Body of pancreas (tissue), 4 donors: ENCODE measurements at regions of chr10 and their contacts with region 1.

Region 1: DNA sequence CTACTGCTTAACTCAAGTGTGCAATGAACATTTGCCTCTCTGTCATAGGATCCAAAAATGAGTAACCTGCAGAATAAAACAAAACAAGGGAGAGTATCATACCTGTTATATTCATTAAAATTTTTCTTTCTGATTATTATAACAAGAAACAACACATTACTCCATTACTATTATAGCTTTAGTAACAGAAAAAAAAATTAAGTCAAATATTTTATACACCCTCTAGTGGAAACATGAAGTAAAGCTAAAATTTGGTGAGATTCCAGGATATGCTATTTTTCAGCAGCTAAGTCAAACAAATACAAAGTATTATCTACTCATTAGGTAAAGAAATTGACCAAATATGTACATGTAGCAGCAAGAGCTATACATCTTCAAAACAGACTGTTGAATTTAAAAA is 56.3 kb downstream of the PDZD8 start:
- DNase-seq: no peak
- ATAC-seq: no peak
- H3K4me3 ChIP-seq: no peak overlapping the region
- H3K27ac ChIP-seq: no peak overlapping the region
- H3K4me1 ChIP-seq: peaks cover 16% of the 10 kb centered on the region
- H3K27me3 ChIP-seq: no peaks in the 10 kb centered on the region
- CTCF ChIP-seq: peak; percentile 14 to 39 (median 30)
- POLR2A ChIP-seq: no peak

Region 2: GRCh38 chr10:116985611-116986010 is 333.3 kb before region 1 on chr10:
- intact Hi-C with region 1: no loop called
- DNase-seq: no peak
- ATAC-seq: no peak
- H3K4me3 ChIP-seq: no peak overlapping the region
- H3K27ac ChIP-seq: no peak overlapping the region
- H3K4me1 ChIP-seq: no peaks in the 10 kb centered on the region
- H3K27me3 ChIP-seq: no peaks in the 10 kb centered on the region
- CTCF ChIP-seq: no peak
- POLR2A ChIP-seq: no peak

Region 3: GRCh38 chr10:117221156-117221711 is 97.7 kb before region 1 on chr10:
- intact Hi-C with region 1: loop called (anchors 5 kb)
- DNase-seq: no peak
- ATAC-seq: no peak
- H3K4me3 ChIP-seq: no peak overlapping the region
- H3K27ac ChIP-seq: no peak overlapping the region
- H3K4me1 ChIP-seq: peaks cover 12% of the 10 kb centered on the region
- H3K27me3 ChIP-seq: peaks cover 0 to 3% of the 10 kb centered on the region in 2 donors
- CTCF ChIP-seq: no peak
- POLR2A ChIP-seq: no peak

Region 4: GRCh38 chr10:117720931-117721835 is 402.3 kb after region 1 on chr10:
- intact Hi-C with region 1: no loop called
- DNase-seq: peak in 2 of 4 donors; percentile 11 to 14
- ATAC-seq: no peak
- H3K4me3 ChIP-seq: no peak overlapping the region
- H3K27ac ChIP-seq: no peak overlapping the region
- H3K4me1 ChIP-seq: no peaks in the 10 kb centered on the region
- H3K27me3 ChIP-seq: peaks cover 0 to 5% of the 10 kb centered on the region in 2 donors
- CTCF ChIP-seq: no peak
- POLR2A ChIP-seq: no peak

Region 5: DNA sequence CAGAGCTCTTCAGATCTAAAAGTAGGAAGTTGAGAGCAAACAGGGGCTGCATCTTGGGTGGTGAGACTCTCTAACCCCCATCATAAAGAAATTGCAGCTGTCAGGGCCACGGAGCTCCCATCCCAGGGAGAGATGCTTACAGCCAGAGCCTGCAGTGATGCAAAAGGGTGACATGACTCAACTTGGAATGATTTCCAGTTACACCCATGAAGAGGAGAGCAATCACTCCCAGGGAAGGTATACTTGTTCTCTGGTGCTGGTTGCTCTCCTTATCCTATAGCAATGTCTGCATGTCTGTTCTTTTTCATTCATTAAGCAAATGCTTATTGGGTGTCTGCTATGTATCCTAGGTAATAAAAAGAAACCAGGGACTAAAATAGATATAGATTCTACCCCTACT is 499.8 kb after region 1 on chr10:
- intact Hi-C with region 1: no loop called
- DNase-seq: no peak
- ATAC-seq: no peak
- H3K4me3 ChIP-seq: no peak overlapping the region
- H3K27ac ChIP-seq: no peak overlapping the region
- H3K4me1 ChIP-seq: no peaks in the 10 kb centered on the region
- H3K27me3 ChIP-seq: no peaks in the 10 kb centered on the region
- CTCF ChIP-seq: no peak
- POLR2A ChIP-seq: no peak